ENCODE measurements at regions of chr4 and their contacts with region 1.

Region 1: GRCh38 chr4:146522098-146522868 is 543 bp upstream of the SLC10A7 start:
- DNase-seq: peak; percentile 51 to 71
- H3K4me3 ChIP-seq: peak overlapping the region; percentile 95
- H3K27ac ChIP-seq: peak overlapping the region; percentile 83
- H3K4me1 ChIP-seq: peaks cover 15% of the 10 kb centered on the region
- H3K27me3 ChIP-seq: no peaks in the 10 kb centered on the region
- CTCF ChIP-seq: no peak

Region 2: GRCh38 chr4:146329042-146329716 is 193.1 kb before region 1 on chr4:
- CTCF ChIA-PET with region 1: no interaction called
- POLR2A ChIA-PET with region 1: no interaction called
- intact Hi-C with region 1: no loop called
- DNase-seq: peak in 1 of 2 experiments; percentile 70
- H3K4me3 ChIP-seq: no peak overlapping the region
- H3K27ac ChIP-seq: peak overlapping the region; percentile 98
- H3K4me1 ChIP-seq: peaks cover 22% of the 10 kb centered on the region
- H3K27me3 ChIP-seq: no peaks in the 10 kb centered on the region
- CTCF ChIP-seq: no peak

Region 3: GRCh38 chr4:146379744-146380143 is 142.5 kb before region 1 on chr4:
- CTCF ChIA-PET with region 1: no interaction called
- POLR2A ChIA-PET with region 1: no interaction called
- intact Hi-C with region 1: no loop called
- DNase-seq: no peak
- H3K4me3 ChIP-seq: no peak overlapping the region
- H3K27ac ChIP-seq: no peak overlapping the region
- H3K4me1 ChIP-seq: no peaks in the 10 kb centered on the region
- H3K27me3 ChIP-seq: no peaks in the 10 kb centered on the region
- CTCF ChIP-seq: no peak

Region 4: GRCh38 chr4:146486565-146486964 is 35.7 kb before region 1 on chr4:
- CTCF ChIA-PET with region 1: no interaction called
- POLR2A ChIA-PET with region 1: interaction called, 4 read pairs
- intact Hi-C with region 1: loop called (anchors 1 kb)
- DNase-seq: no peak
- H3K4me3 ChIP-seq: no peak overlapping the region
- H3K27ac ChIP-seq: no peak overlapping the region
- H3K4me1 ChIP-seq: no peaks in the 10 kb centered on the region
- H3K27me3 ChIP-seq: no peaks in the 10 kb centered on the region
- CTCF ChIP-seq: no peak

Region 5: GRCh38 chr4:146495277-146495676 is 27.0 kb before region 1 on chr4:
- CTCF ChIA-PET with region 1: no interaction called
- POLR2A ChIA-PET with region 1: interaction called, 4 read pairs
- intact Hi-C with region 1: loop called (anchors 1 kb)
- DNase-seq: peak in 1 of 2 experiments; percentile 62
- H3K4me3 ChIP-seq: no peak overlapping the region
- H3K27ac ChIP-seq: no peak overlapping the region
- H3K4me1 ChIP-seq: peaks cover 11% of the 10 kb centered on the region
- H3K27me3 ChIP-seq: no peaks in the 10 kb centered on the region
- CTCF ChIP-seq: no peak

Measured in PC-9 (cell line).